Heart right ventricle (tissue), 16 donors: ENCODE measurements at regions of chr20 and their contacts with region 1.

Region 1: DNA sequence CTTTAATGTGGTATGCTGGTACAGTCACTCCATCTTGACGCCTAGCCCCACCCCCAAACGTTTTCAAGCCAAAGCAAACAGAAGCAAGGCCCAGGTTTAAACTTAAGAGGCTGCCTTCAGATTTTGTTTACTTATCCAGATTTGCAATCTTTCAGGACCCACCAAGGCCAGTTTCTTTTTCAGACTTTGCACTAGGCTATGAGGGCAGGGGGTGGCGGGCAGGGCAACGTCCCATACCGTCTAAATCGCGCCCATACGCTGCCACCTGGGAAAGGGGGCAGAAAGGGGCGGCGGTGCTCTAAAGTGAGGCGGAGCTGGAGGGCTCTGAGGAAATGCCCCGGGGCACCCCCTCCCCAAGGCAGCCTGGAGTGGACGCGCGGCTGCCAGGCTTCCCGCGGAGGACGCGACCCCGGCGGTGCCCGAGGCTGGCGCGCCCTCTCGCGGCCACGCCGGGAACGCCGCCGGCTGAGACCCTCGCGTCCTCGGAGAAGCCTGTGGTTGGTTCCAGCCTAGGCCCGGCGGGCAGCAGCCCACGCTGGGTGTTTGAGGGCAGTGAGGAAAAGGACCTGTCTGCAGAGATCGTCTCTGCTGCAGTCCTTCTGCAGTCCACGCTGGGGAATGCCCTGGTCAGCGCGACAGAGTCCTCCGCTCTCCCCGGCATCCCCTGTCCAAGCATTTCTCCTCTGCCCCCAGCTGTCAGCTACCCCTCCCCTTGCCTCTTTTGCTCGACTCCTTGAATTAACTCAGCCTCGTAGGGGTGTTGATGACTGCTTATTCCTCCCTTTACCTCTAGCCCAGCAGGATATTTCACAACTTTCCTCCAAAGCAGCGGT is 129.2 kb upstream of the PRND start:
- DNase-seq: peak in 1 of 2 donors; percentile 55
- ATAC-seq: peak; percentile 68 to 93 (median 77)
- H3K4me3 ChIP-seq: peak overlapping the region in 8 of 10 donors; percentile 13 to 55 (median 42)
- H3K27ac ChIP-seq: no peak overlapping the region
- H3K4me1 ChIP-seq: peaks cover 0 to 13% (median 9%) of the 10 kb centered on the region in 9 donors
- H3K27me3 ChIP-seq: peaks cover 0 to 25% (median 4%) of the 10 kb centered on the region in 7 donors
- CTCF ChIP-seq: peak; percentile 77 to 98 (median 94)

Region 2: GRCh38 chr20:4244700-4245485 is 347.6 kb before region 1 on chr20:
- intact Hi-C with region 1: loop called in 4 of 10 experiments (anchors 1 to 5 kb)
- DNase-seq: peak in 1 of 2 donors; percentile 28
- ATAC-seq: no peak
- H3K4me3 ChIP-seq: no peak overlapping the region
- H3K27ac ChIP-seq: no peak overlapping the region
- H3K4me1 ChIP-seq: peaks cover 0 to 12% (median 8%) of the 10 kb centered on the region in 9 donors
- H3K27me3 ChIP-seq: peaks cover 5 to 79% (median 54%) of the 10 kb centered on the region in 7 donors
- CTCF ChIP-seq: no peak

Region 3: DNA sequence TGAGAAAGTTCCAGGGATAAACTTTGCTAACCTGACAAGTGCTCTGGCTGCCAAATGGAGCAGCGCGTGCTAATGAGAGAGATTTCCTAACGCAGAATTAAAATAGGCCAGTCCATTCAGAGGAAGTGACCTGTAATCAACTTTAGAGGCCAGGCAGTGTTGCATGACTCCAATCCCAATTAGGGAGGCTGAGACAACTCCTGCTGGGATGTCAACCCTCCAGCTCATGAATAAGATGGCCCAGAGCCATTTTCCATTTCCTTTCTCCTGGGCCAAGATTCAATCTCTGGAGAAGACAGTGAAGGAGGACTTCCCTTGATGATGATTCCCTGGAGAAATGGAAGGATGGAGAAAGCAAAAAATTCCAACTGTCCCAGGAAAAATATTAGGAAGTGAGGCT is 335.7 kb before region 1 on chr20:
- intact Hi-C with region 1: loop called in 1 of 10 experiments (anchors 5 kb)
- DNase-seq: peak in 1 of 2 donors; percentile 39
- ATAC-seq: peak in 7 of 8 donors; percentile 48 to 89 (median 69)
- H3K4me3 ChIP-seq: no peak overlapping the region
- H3K27ac ChIP-seq: peak overlapping the region in 1 of 10 donors; percentile 14
- H3K4me1 ChIP-seq: peaks cover 0 to 14% (median 0%) of the 10 kb centered on the region in 9 donors
- H3K27me3 ChIP-seq: peaks cover 0 to 7% (median 0%) of the 10 kb centered on the region in 7 donors
- CTCF ChIP-seq: no peak